ENCODE measurements at regions of chr20 and their contacts with region 1.

Region 1: GRCh38 chr20:13784893-13785715 is at the starts of genes ESF1 and NDUFAF5:
- DNase-seq: peak; percentile 93
- CTCF ChIP-seq: no peak

Region 2: GRCh38 chr20:13302647-13303450 is 482.3 kb before region 1 on chr20:
- in situ Hi-C with region 1: loop called (anchors 25 kb)
- DNase-seq: peak; percentile 44
- CTCF ChIP-seq: peak; percentile 47